Caco-2 (cell line): ENCODE measurements at regions of chr16 and their contacts with region 1.

Region 1: DNA sequence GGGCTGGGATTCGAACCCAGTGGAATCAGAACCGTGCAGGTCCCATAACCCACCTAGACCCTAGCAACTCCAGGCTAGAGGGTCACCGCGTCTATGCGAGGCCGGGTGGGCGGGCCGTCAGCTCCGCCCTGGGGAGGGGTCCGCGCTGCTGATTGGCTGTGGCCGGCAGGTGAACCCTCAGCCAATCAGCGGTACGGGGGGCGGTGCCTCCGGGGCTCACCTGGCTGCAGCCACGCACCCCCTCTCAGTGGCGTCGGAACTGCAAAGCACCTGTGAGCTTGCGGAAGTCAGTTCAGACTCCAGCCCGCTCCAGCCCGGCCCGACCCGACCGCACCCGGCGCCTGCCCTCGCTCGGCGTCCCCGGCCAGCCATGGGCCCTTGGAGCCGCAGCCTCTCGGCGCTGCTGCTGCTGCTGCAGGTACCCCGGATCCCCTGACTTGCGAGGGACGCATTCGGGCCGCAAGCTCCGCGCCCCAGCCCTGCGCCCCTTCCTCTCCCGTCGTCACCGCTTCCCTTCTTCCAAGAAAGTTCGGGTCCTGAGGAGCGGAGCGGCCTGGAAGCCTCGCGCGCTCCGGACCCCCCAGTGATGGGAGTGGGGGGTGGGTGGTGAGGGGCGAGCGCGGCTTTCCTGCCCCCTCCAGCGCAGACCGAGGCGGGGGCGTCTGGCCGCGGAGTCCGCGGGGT is at the start of gene CDH1:
- DNase-seq: peak; percentile 98 to 99
- H3K4me3 ChIP-seq: peak within 1 kb of the TSS; percentile 99
- H3K4me3 Mint-ChIP-seq: peak within 1 kb of the TSS; percentile 88
- H3K27ac Mint-ChIP-seq: peak within 1 kb of the TSS; percentile 88
- H3K4me1 ChIP-seq: peaks cover 63% of the 10 kb centered on the region
- H3K4me1 Mint-ChIP-seq: peaks cover 44% of the 10 kb centered on the region
- H3K27me3 ChIP-seq: no peaks in the 10 kb centered on the region
- H3K27me3 Mint-ChIP-seq: no peaks in the 10 kb centered on the region
- CTCF ChIP-seq: no peak
- total RNA-seq, gene CDH1: 712 and 783 TPM in 2 replicates

Region 2: DNA sequence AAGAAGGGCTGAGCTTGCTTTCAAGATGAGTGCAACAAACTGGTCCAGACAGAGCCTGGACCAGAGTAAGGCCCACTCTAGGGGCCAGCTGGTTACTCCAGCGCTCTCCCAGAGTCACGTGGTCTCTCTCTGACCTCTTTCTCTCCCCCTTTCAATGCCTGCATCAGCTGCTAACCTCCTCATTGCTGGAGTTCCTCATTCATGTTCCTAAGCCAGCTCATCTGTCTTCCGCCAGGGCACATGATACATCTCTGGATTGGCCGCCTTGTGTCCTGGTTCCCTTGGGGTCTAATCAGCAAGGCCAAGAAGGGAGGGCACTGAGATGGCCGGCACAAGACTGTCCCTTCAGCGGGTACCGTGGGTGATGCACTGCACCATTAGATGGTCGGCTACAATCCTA is 225.0 kb before region 1 on chr16:
- CTCF ChIA-PET with region 1: no interaction called
- POLR2A ChIA-PET with region 1: no interaction called
- intact Hi-C with region 1: no loop called
- DNase-seq: no peak
- H3K4me3 ChIP-seq: no peak overlapping the region
- H3K4me3 Mint-ChIP-seq: no peak overlapping the region
- H3K27ac Mint-ChIP-seq: no peak overlapping the region
- H3K4me1 ChIP-seq: no peaks in the 10 kb centered on the region
- H3K4me1 Mint-ChIP-seq: no peaks in the 10 kb centered on the region
- H3K27me3 ChIP-seq: peaks cover 1% of the 10 kb centered on the region; the same call in 1 of the 2 replicates
- H3K27me3 Mint-ChIP-seq: peaks cover 10% of the 10 kb centered on the region
- CTCF ChIP-seq: no peak

Region 3: GRCh38 chr16:68644715-68645493 is 92.3 kb before region 1 on chr16 and contains the start of gene CDH3:
- CTCF ChIA-PET with region 1: no interaction called
- POLR2A ChIA-PET with region 1: interaction called, 10 read pairs
- intact Hi-C with region 1: no loop called
- DNase-seq: peak; percentile 93 to 95
- H3K4me3 ChIP-seq: peak within 1 kb of the TSS; percentile 97
- H3K4me3 Mint-ChIP-seq: peak within 1 kb of the TSS; percentile 90
- H3K27ac Mint-ChIP-seq: peak within 1 kb of the TSS; percentile 80
- H3K4me1 ChIP-seq: peaks cover 21% of the 10 kb centered on the region
- H3K4me1 Mint-ChIP-seq: peaks cover 19% of the 10 kb centered on the region
- H3K27me3 ChIP-seq: no peaks in the 10 kb centered on the region
- H3K27me3 Mint-ChIP-seq: no peaks in the 10 kb centered on the region
- CTCF ChIP-seq: peak in 1 of 2 experiments; percentile 33
- total RNA-seq, gene CDH3: 114 and 144 TPM in 2 replicates

Region 4: DNA sequence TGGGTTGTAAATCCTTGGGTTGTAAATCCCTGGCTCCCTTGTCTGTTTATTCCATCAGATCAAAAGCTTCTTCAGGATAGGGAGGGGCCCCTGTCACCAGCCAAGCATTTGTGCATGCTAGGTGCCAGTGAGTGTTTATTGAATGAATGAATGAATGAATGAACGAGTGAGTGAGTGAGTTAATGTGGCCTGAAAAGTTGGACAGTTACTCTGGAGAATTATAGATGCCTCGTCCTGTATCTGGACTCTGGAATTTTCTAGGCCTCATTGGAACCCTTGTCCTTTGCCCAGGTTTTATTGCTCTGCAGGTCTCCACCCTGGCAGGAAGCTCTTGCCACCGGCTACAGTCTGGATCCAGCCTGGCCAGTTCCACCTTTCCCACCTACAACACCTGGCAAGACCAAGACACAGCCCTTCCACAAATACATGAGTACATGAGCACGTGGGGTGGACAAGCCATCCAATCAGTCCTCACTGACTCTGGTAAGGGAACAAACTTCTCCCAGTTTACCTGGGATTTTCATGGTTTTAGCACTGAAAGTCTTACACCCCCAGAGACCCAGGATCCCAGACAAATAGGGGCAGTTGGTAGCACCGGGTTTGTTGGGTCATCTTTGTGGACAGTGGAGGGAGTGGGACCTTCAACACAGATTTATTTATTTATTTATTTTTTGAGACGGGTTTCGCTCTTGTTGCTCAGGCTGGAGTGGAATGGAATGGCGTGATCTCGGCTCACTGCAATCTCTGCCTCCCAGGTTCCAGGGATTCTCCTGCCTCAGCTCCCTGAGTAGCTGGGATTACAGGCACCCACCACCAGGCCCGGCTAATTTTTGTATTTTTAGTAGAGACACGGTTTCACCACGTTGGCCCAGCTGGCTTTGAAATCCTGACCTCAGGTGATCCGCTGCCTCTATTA is 14.8 kb before region 1 on chr16:
- CTCF ChIA-PET with region 1: interaction called, 4 read pairs
- POLR2A ChIA-PET with region 1: interaction called, 14 read pairs
- intact Hi-C with region 1: no loop called
- DNase-seq: peak in 1 of 2 experiments; percentile 72
- H3K4me3 ChIP-seq: no peak overlapping the region
- H3K4me3 Mint-ChIP-seq: no peak overlapping the region
- H3K27ac Mint-ChIP-seq: peak overlapping the region; percentile 59
- H3K4me1 ChIP-seq: peaks cover 36% of the 10 kb centered on the region
- H3K4me1 Mint-ChIP-seq: peaks cover 19% of the 10 kb centered on the region
- H3K27me3 ChIP-seq: no peaks in the 10 kb centered on the region
- H3K27me3 Mint-ChIP-seq: no peaks in the 10 kb centered on the region
- CTCF ChIP-seq: no peak

Region 5: DNA sequence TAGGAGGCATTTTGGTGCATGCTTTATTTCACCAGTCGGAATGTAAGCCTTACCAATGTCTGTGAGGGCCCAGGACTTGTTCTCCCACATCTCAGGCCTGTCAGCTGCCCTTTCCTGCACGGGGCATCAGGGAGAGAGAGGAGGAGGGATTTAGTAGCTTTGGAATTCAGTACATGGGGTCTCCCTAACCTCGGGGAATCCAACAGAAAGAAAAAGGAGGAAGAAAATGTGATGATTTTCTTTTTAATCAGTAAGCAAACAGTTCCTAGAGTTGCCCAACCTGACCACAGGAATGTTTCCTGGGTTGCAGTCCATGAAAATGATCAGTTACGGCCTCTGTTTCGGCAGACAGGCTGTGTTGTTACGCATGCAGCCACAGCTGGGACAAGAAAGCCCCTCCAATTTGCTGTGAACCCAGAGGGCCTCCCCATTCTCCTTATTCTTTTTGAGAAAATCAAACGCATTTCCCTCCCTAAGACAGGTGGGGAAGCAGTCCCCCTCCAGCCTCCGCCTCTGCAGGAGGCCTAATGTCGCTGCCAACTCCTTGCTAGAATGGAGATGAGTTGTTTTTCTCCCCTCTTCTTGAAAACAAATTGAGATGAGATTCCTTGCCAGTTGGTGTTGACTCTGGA is 53.1 kb after region 1 on chr16:
- CTCF ChIA-PET with region 1: interaction called, 8 read pairs
- POLR2A ChIA-PET with region 1: interaction called, 11 read pairs
- intact Hi-C with region 1: no loop called
- DNase-seq: peak; percentile 77 to 82
- H3K4me3 ChIP-seq: no peak overlapping the region
- H3K4me3 Mint-ChIP-seq: peak overlapping the region; percentile 9
- H3K27ac Mint-ChIP-seq: peak overlapping the region; percentile 76
- H3K4me1 ChIP-seq: peaks cover 61% of the 10 kb centered on the region
- H3K4me1 Mint-ChIP-seq: peaks cover 41% of the 10 kb centered on the region
- H3K27me3 ChIP-seq: no peaks in the 10 kb centered on the region
- H3K27me3 Mint-ChIP-seq: no peaks in the 10 kb centered on the region
- CTCF ChIP-seq: no peak

Region 6: GRCh38 chr16:68834550-68834949 is 97.4 kb after region 1 on chr16:
- CTCF ChIA-PET with region 1: no interaction called
- POLR2A ChIA-PET with region 1: no interaction called
- intact Hi-C with region 1: no loop called
- DNase-seq: no peak
- H3K4me3 ChIP-seq: no peak overlapping the region
- H3K4me3 Mint-ChIP-seq: no peak overlapping the region
- H3K27ac Mint-ChIP-seq: no peak overlapping the region
- H3K4me1 ChIP-seq: no peaks in the 10 kb centered on the region
- H3K4me1 Mint-ChIP-seq: peaks cover 8% of the 10 kb centered on the region
- H3K27me3 ChIP-seq: no peaks in the 10 kb centered on the region
- H3K27me3 Mint-ChIP-seq: no peaks in the 10 kb centered on the region
- CTCF ChIP-seq: no peak

Region 7: GRCh38 chr16:69031877-69032301 is 294.7 kb after region 1 on chr16:
- CTCF ChIA-PET with region 1: no interaction called
- POLR2A ChIA-PET with region 1: interaction called, 16 read pairs
- intact Hi-C with region 1: no loop called
- DNase-seq: peak; percentile 86 to 93
- H3K4me3 ChIP-seq: no peak overlapping the region
- H3K4me3 Mint-ChIP-seq: peak overlapping the region; percentile 25
- H3K27ac Mint-ChIP-seq: peak overlapping the region; percentile 80
- H3K4me1 ChIP-seq: peaks cover 15% of the 10 kb centered on the region
- H3K4me1 Mint-ChIP-seq: peaks cover 8% of the 10 kb centered on the region
- H3K27me3 ChIP-seq: no peaks in the 10 kb centered on the region
- H3K27me3 Mint-ChIP-seq: no peaks in the 10 kb centered on the region
- CTCF ChIP-seq: no peak